ENCODE measurements at regions of chr5 and their contacts with region 1.

Region 1: GRCh38 chr5:87780831-87781760 is 368.4 kb upstream of the CCNH start:
- DNase-seq: peak; percentile 61
- H3K4me3 ChIP-seq: no peak overlapping the region
- H3K27ac ChIP-seq: no peak overlapping the region
- H3K27me3 ChIP-seq: no peaks in the 10 kb centered on the region
- CTCF ChIP-seq: peak; percentile 97

Region 2: DNA sequence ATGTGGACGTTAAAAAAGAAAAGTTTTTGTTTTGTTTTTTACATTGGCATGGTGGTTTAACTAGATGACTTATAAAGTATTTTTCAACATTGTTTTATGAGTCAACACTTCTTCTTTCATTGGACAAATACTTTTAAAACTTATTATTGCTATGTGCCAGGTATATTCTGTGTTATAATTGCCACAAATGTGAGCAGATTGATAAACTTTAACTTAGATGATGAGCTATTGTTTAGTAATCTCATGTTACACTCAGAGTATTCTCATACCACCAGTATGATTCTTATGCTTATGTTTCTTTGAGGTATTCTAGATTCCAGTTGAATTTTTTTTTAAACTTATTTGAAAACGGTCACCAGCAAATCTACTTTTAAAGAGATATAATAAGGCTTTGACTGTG is 453.1 kb before region 1 on chr5:
- CTCF ChIA-PET with region 1: no interaction called
- POLR2A ChIA-PET with region 1: no interaction called
- DNase-seq: no peak
- H3K4me3 ChIP-seq: no peak overlapping the region
- H3K27ac ChIP-seq: no peak overlapping the region
- H3K27me3 ChIP-seq: no peaks in the 10 kb centered on the region
- CTCF ChIP-seq: no peak

Region 3: GRCh38 chr5:87770601-87771121 is 10.4 kb before region 1 on chr5:
- CTCF ChIA-PET with region 1: interaction called, 28 read pairs
- POLR2A ChIA-PET with region 1: no interaction called
- DNase-seq: no peak
- H3K4me3 ChIP-seq: no peak overlapping the region
- H3K27ac ChIP-seq: no peak overlapping the region
- H3K27me3 ChIP-seq: no peaks in the 10 kb centered on the region
- CTCF ChIP-seq: no peak

Region 4: GRCh38 chr5:88680253-88681132 is 899.4 kb after region 1 on chr5:
- CTCF ChIA-PET with region 1: interaction called, 37 read pairs
- POLR2A ChIA-PET with region 1: no interaction called
- DNase-seq: no peak
- H3K4me3 ChIP-seq: peak overlapping the region; percentile 47
- H3K27ac ChIP-seq: no peak overlapping the region
- H3K27me3 ChIP-seq: peaks cover 93% of the 10 kb centered on the region
- CTCF ChIP-seq: peak; percentile 89

Measured in AG04450 (cell line).